Vagina (tissue), 2 donors: ENCODE measurements at regions of chr14 and their contacts with region 1.

Region 1: DNA sequence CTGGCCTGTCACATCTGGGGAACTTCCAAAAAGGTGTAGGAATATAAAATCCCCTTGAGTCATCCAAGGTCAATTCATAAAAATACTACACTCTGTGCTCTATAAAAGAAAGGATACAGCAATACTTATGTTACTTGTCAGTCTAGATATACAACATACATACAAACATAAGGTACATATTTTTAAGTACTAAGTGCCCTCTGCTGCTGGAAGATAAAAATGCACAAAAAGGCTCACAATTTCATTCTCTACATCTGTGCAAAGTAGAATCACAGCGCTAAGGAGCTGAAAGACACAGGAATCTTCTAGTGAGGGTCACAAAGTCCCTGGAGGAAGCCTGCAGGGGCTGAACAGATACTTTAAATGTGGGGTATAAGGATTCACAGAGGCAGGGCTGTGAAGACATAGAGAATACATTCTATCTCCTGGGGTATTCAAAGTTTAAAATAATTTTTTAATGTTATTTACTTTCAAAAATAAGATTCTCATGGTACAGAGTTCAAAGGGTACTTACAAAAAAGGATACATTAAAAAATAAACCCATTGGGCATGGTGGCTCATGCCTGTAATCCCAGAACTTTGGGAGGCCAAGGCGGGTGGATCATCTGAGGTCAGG is 10.2 kb upstream of the GOLGA5 start:
- DNase-seq: no peak
- H3K4me3 ChIP-seq: no peak overlapping the region
- H3K27ac ChIP-seq: no peak overlapping the region
- H3K4me1 ChIP-seq: no peaks in the 10 kb centered on the region
- H3K27me3 ChIP-seq: no peaks in the 10 kb centered on the region
- CTCF ChIP-seq: peak; percentile 28 to 78 (median 48)
- POLR2A ChIP-seq: no peak

Region 2: GRCh38 chr14:92686900-92687444 is 97.0 kb before region 1 on chr14:
- intact Hi-C with region 1: loop called (anchors 10 kb)
- DNase-seq: no peak
- H3K4me3 ChIP-seq: peak overlapping the region; percentile 38 to 39
- H3K27ac ChIP-seq: peak overlapping the region; percentile 14
- H3K4me1 ChIP-seq: peaks cover 9% of the 10 kb centered on the region
- H3K27me3 ChIP-seq: no peaks in the 10 kb centered on the region
- CTCF ChIP-seq: peak; percentile 91 to 99 (median 96)
- POLR2A ChIP-seq: no peak

Region 3: DNA sequence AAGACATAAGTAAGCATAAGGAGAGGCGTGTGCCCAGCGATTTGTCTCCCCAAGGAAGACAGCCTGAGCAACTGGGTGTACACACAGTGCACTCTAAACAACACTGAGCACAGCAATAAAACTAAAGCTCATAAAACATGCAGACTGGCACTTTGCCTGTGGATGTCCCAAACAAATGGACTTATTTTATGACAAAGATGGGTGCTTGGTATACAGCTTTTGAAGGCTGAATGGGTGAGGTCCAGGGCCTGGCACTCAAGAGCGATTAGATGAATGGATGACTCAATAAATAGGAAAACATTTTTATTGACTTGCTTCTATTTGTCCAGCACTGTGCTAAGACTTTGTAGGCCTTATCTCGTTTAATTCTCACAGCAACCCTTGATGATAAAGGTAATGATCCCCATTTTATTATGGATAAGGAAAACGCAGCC is 64.0 kb before region 1 on chr14:
- intact Hi-C with region 1: loop called (anchors 10 kb)
- DNase-seq: no peak
- H3K4me3 ChIP-seq: no peak overlapping the region
- H3K27ac ChIP-seq: peak overlapping the region; percentile 80
- H3K4me1 ChIP-seq: peaks cover 19% of the 10 kb centered on the region
- H3K27me3 ChIP-seq: no peaks in the 10 kb centered on the region
- CTCF ChIP-seq: no peak
- POLR2A ChIP-seq: no peak

Region 4: DNA sequence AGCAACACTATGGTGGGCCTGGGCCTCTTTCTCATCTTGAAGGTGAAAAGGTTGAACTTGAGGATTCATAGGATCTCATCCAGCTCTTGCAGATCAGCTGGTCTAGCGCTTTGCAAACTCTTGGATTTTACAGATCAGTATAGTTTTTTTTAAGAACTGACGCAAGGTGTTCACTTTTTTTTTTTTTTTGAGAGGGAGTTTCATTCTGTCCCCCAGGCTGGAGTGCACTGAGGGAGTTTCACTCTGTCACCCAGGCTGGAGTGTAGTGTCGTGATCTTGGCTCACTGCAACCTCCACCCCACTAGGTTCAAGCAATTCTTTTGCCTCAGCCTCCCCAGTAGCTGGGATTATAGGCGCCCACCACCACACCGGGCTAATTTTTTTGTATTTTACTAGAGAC is 15.1 kb before region 1 on chr14:
- intact Hi-C with region 1: no loop called
- DNase-seq: no peak
- H3K4me3 ChIP-seq: no peak overlapping the region
- H3K27ac ChIP-seq: no peak overlapping the region
- H3K4me1 ChIP-seq: no peaks in the 10 kb centered on the region
- H3K27me3 ChIP-seq: no peaks in the 10 kb centered on the region
- CTCF ChIP-seq: no peak
- POLR2A ChIP-seq: no peak

Region 5: GRCh38 chr14:92986254-92987147 is 202.6 kb after region 1 on chr14:
- intact Hi-C with region 1: no loop called
- DNase-seq: no peak
- H3K4me3 ChIP-seq: no peak overlapping the region
- H3K27ac ChIP-seq: peak overlapping the region; percentile 60
- H3K4me1 ChIP-seq: peaks cover 41% of the 10 kb centered on the region
- H3K27me3 ChIP-seq: no peaks in the 10 kb centered on the region
- CTCF ChIP-seq: no peak
- POLR2A ChIP-seq: no peak